Dendritic cell treated with granulocyte-macrophage colony-stimulating factor and Interleukin-4, amounts not matched to agents 40 ng/mL and 50 ng/mL, for 4 days (primary cell): ENCODE measurements at regions of chr14 and their contacts with region 1.

Region 1: GRCh38 chr14:95319312-95320021 is at the start of gene CLMN:
- H3K4me3 Mint-ChIP-seq: peak within 1 kb of the TSS; percentile 85
- H3K27ac Mint-ChIP-seq: peak within 1 kb of the TSS; percentile 79
- H3K4me1 Mint-ChIP-seq: peaks cover 89% of the 10 kb centered on the region
- H3K27me3 Mint-ChIP-seq: peaks cover 7% of the 10 kb centered on the region

Region 2: GRCh38 chr14:94823556-94824338 is 495.7 kb before region 1 on chr14:
- intact Hi-C with region 1: no loop called
- H3K4me3 Mint-ChIP-seq: no peak overlapping the region
- H3K27ac Mint-ChIP-seq: no peak overlapping the region
- H3K4me1 Mint-ChIP-seq: no peaks in the 10 kb centered on the region
- H3K27me3 Mint-ChIP-seq: peaks cover 1% of the 10 kb centered on the region

Region 3: DNA sequence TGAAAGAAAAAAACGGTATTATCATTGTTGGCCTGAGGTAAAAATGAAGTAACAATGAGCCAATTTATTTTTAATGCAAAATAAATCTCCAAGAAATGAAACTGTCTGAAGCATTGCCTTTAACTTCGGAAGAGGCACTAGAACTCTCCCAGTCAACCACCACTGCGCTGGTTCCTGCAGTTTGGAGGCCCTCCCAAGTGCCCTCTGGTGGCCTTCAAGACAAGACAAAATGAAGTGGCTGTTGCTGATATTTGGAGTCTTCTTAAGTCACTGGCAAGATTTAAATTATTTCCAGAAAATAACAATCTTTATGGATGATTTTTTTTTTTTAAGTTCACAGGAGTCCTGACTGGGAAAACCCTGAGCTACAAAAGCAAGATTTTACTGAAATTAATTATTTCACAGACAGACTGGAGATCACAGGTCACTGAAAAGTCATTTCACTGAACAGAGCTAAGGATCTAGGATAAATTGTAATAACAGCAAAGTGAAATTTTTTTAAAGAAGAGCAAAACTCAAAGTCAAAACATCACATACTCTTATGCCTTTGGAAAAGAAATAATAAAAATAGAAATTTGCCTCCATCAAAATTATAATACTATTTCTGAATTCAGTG is 220.4 kb before region 1 on chr14:
- intact Hi-C with region 1: no loop called
- H3K4me3 Mint-ChIP-seq: no peak overlapping the region
- H3K27ac Mint-ChIP-seq: no peak overlapping the region
- H3K4me1 Mint-ChIP-seq: peaks cover 14% of the 10 kb centered on the region
- H3K27me3 Mint-ChIP-seq: no peaks in the 10 kb centered on the region

Region 4: GRCh38 chr14:95255487-95255886 is 64.0 kb before region 1 on chr14:
- intact Hi-C with region 1: loop called (anchors 5 kb)
- H3K4me3 Mint-ChIP-seq: peak overlapping the region; percentile 4
- H3K27ac Mint-ChIP-seq: no peak overlapping the region
- H3K4me1 Mint-ChIP-seq: peaks cover 16% of the 10 kb centered on the region
- H3K27me3 Mint-ChIP-seq: no peaks in the 10 kb centered on the region